ENCODE measurements at regions of chr19 and their contacts with region 1.

Region 1: GRCh38 chr19:57599761-57600383 is at the start of gene ZNF530:
- DNase-seq: peak; percentile 97
- H3K4me3 ChIP-seq: peak within 1 kb of the TSS; percentile 68 to 88 (median 70)
- H3K27ac ChIP-seq: peak within 1 kb of the TSS in 3 of 4 donors; percentile 50 to 57 (median 55)
- H3K4me1 ChIP-seq: peaks cover 0 to 13% (median 9%) of the 10 kb centered on the region in 4 donors
- H3K27me3 ChIP-seq: no peaks in the 10 kb centered on the region
- CTCF ChIP-seq: no peak
- EP300 ChIP-seq: no peak
- POLR2A ChIP-seq: no peak
- total RNA-seq, gene ZNF530: 1.2 to 12.5 (median 3.1) TPM

Region 2: GRCh38 chr19:57559404-57560025 is 40.4 kb before region 1 on chr19 and contains the start of gene ZNF550:
- intact Hi-C with region 1: loop called (anchors 1 kb)
- DNase-seq: peak; percentile 94
- H3K4me3 ChIP-seq: peak within 1 kb of the TSS; percentile 59 to 92 (median 88)
- H3K27ac ChIP-seq: peak within 1 kb of the TSS; percentile 68 to 78 (median 72)
- H3K4me1 ChIP-seq: peaks cover 0 to 20% (median 16%) of the 10 kb centered on the region in 4 donors
- H3K27me3 ChIP-seq: no peaks in the 10 kb centered on the region
- CTCF ChIP-seq: no peak
- EP300 ChIP-seq: no peak
- POLR2A ChIP-seq: peak; percentile 34 to 35
- total RNA-seq, gene ZNF550: 4.1 to 6.6 (median 5.0) TPM

Region 3: DNA sequence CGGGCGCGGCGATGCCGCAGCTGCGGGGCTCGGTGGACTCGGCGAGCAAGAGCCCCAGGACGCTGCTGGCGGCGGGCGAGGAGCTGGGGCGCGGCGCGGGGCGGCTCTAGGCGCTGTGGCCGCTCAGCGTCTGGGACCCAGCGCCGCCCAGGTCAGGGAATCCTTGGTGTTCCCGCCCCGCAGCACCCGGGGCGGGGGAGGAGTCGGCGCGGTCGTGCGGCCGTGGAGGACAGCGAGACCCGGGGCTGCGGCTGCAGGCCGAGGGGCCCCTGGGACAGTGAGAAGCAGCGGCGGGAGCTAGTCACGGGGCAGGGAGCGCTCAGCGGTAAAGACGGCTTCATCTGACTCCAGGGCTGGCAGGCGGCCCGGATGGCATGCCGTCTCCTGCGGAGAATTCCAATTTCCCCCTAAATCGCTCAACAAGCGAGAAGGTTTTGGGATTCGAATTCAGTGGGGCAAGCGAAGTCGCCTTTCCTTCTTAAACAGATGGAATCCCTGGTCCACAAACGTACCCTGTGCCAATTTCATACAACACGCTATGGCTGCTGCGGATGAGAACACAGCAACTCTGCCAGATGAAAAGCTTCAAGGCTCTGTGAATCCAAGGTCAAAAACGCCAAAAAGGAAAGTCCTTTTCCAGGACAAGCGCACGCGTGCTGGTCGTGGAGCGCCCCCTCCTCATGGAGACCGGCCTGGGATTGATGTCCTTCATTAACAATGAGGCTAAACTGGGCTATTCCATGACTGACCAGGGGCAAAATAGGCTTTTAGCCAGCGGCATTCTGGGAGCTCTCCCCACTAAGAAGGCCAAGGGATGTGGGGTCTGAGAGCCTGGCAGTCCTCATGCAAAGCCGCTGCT is 64.6 kb after region 1 on chr19:
- intact Hi-C with region 1: no loop called
- DNase-seq: peak; percentile 75
- H3K4me3 ChIP-seq: peak overlapping the region; percentile 41 to 77 (median 62)
- H3K27ac ChIP-seq: peak overlapping the region; percentile 78 to 88 (median 86)
- H3K4me1 ChIP-seq: peaks cover 0 to 13% (median 6%) of the 10 kb centered on the region in 4 donors
- H3K27me3 ChIP-seq: peaks cover 0 to 7% (median 0%) of the 10 kb centered on the region in 3 donors
- CTCF ChIP-seq: no peak
- EP300 ChIP-seq: no peak
- POLR2A ChIP-seq: no peak

Measured in sigmoid colon (tissue), 7 donors.